PC-9 (cell line): ENCODE measurements at regions of chr19 and their contacts with region 1.

Region 1: DNA sequence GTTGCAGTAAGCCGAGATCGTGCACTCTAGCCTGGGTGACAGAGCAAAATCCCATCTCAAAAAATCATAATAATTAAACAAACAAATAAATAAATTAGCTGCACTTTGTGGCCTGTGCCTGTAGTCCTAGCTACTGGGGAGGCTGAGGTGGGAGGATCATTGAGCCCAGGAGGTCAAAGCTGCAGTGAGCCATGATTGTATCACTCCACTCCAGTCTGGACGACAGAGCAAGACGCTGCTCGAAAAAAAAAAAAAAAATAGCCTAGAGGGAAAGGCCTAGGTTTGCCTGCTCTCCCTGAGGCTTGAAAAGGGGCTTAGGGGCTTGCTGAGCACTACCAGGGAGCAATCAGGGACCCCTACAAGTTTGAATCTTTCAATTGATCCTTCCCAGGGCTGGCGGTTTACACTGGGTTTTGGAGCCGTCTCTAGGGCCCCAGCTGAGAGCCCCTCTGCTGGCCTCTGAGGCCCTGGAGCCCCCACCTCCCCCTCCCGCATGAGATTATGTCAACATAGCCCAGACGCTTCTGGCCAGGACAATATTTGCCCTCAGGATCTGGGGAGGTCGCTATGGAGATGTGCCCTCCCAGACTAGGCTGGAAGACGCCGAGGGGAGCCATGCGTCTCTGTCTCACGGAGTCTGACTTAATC is 10.4 kb upstream of the GIPR start:
- DNase-seq: no peak
- H3K4me3 ChIP-seq: no peak overlapping the region
- H3K27ac ChIP-seq: no peak overlapping the region
- H3K4me1 ChIP-seq: no peaks in the 10 kb centered on the region
- H3K27me3 ChIP-seq: 0 out of 2 replicates have a peak, but pooled peaks cover 3% of the 10 kb centered on the region
- CTCF ChIP-seq: no peak

Region 2: DNA sequence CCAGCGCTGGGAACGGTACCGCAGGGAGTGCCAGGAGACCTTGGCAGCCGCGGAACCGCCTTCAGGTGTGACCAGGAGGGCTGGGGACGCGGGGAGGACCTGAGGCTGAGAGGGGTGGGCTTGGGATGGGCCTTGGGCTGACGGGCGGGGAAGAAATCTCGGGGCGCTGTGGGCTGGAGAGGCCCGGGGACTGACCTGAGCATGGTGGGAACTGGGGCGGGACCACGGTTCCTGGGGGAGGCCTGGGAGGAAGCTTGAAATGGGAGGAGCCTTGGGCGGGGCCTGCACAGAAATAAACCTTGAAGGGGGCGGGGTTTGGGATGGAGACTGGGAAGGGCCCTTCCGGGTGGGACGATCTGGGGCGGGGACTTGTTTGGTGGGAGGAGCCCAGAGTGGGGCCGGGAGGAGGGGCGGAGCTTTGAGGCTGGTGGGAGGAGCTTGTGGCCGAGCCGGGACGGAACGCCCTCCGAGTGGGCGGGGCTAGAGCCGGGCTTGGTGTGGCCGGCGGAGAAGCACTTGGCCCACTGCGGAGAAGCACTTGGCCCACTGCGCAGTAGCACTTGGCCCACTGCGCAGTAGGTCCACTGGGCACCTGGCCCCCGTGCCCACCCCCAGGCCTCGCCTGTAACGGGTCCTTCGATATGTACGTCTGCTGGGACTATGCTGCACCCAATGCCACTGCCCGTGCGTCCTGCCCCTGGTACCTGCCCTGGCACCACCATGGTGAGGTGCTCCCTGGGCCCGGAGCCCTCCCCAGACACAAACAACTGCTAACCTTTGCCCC is 13.2 kb after region 1 on chr19:
- CTCF ChIA-PET with region 1: no interaction called
- POLR2A ChIA-PET with region 1: interaction called, 11 read pairs
- intact Hi-C with region 1: no loop called
- DNase-seq: peak; percentile 81 to 96
- H3K4me3 ChIP-seq: peak overlapping the region; percentile 51; the same call in 1 of the 2 replicates
- H3K27ac ChIP-seq: no peak overlapping the region
- H3K4me1 ChIP-seq: peaks cover 35% of the 10 kb centered on the region
- H3K27me3 ChIP-seq: no peaks in the 10 kb centered on the region
- CTCF ChIP-seq: no peak

Region 3: DNA sequence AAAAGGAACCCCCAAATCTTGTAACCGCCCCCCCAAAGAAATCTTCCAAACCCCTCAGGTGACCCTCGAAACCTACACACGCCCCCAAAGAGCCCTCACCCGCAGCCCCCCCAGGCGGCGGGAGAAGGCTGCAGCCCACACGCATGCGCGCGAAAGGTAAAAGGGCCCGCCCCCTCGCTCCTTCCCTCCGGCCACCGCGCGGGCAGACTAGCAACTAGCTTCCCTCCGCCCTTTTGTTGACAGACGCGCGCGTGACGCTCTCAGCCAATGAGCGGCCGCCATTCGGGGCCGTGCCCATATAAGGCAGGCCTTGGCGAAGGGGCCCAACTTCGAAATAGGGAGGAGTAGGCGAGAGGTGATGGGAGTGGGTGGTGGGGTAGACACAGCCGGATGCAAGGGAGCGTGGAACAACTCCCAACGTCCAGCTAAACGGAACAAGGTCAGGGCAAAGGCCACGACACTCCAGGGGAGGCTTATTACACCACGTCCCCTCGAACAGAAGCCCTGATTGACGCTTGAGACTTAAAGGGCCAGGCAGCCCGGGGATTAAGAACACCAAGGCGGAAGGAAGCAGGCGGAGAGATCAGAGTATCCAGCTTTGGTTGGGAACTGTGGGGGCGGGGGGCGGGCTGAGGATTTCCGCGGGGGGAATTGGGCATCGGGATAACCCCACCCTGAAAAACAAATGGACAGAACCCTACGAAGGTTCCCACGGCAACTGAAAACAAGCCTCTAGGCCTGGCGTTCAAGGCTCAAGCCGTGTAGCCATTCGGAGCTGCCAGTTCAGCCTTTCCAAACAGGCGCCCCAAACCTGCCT is 59.7 kb after region 1 on chr19:
- CTCF ChIA-PET with region 1: no interaction called
- POLR2A ChIA-PET with region 1: no interaction called
- intact Hi-C with region 1: no loop called
- DNase-seq: peak; percentile 99
- H3K4me3 ChIP-seq: peak overlapping the region; percentile 87
- H3K27ac ChIP-seq: peak overlapping the region; percentile 75
- H3K4me1 ChIP-seq: peaks cover 35% of the 10 kb centered on the region
- H3K27me3 ChIP-seq: no peaks in the 10 kb centered on the region
- CTCF ChIP-seq: no peak; the same call in 1 of the 2 replicates